ENCODE measurements at regions of chr17 and their contacts with region 1.

Region 1: DNA sequence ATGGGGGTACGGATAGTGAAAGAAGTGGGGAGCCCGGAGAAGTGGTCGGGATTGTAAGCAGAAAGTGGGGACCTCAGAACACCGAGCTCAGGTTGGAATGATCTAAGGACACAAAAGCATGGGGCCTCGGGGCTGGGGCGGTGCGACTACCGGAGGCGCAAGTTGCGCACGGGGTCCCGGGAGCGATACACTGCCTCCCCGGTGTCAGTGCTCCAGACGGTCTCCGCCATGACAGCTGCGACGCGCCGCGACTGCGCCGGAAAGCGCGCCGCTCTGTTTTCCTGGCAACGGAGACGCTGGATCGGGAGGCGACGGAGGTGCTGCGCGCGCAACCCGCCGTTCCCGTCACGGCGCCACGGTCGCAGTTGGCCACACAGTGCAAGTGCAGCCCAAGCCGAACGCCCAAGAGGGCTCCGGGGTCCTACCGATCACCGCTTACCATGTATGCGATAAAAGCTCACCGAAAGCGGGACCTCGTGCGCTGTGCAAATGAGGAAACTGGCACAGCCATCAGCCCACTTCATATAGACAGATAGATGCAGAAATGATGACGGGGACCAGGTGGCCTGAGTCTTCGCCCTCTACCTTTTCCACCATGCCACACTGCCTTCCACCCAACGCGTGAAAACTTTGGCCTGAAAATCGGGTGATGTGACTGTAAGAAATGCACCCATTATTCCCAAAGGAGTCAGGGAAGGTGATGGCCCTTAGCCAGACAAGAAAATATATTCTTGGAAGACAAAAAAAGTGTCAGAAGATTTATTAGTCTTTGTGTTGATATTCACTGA is at the start of gene MKS1:
- H3K4me3 ChIP-seq: peak within 1 kb of the TSS; percentile 79
- H3K27ac ChIP-seq: peak within 1 kb of the TSS; percentile 14; the same call in 1 of the 2 replicates
- H3K4me1 ChIP-seq: no peaks in the 10 kb centered on the region
- CTCF ChIP-seq: peak; percentile 94

Region 2: DNA sequence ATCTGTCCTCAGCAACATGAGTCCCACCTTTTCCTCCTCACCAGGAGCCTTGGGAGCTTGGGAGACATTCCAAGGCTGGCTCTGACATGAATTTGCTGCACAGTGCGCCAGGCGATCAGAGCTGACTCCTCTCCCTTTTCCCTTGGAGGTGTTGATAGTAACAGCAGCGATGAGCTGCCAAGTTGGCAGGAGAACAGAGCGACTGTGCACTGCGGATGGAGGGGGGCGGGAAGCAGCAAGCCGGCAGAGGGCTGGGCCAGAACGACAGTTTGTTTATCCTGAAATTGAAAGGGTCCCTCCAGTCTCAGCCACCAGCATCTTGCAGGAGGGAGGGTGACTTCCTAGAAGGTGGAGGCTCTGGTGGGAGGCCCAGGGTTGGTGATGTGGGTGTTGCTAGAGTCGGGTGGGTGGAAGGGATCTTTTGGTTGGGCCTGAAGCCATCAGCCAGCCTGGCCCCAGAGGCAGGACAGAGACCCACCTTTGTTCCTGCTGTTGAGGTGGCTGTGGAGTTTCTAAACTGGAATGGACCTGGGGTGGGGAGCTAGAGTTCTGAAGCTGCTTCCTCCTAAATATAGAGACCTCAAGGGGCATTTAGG is 158.5 kb before region 1 on chr17:
- CTCF ChIA-PET with region 1: no interaction called
- POLR2A ChIA-PET with region 1: no interaction called
- H3K4me3 ChIP-seq: no peak overlapping the region
- H3K27ac ChIP-seq: no peak overlapping the region
- H3K4me1 ChIP-seq: no peaks in the 10 kb centered on the region
- CTCF ChIP-seq: no peak

Region 3: DNA sequence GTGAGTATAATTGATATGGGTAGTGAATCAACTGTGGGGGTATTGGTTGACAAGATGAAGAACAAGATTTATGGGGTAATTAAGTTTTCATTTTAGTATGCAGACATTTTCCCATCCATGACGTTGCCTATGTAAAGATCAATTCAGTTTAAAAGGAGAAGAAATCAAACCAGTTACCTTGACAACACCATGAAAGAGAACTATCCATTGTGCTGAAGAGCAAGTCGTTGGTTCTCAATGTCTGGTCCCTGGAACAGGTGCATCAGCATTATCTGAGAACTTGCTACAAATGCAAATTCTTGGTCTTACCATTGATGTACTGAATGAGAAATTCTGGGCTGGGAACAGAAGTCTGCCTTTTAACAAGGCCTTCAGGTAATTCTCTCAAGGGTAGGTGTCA is 53.2 kb before region 1 on chr17:
- CTCF ChIA-PET with region 1: no interaction called
- POLR2A ChIA-PET with region 1: no interaction called
- H3K4me3 ChIP-seq: no peak overlapping the region
- H3K27ac ChIP-seq: no peak overlapping the region
- H3K4me1 ChIP-seq: no peaks in the 10 kb centered on the region
- CTCF ChIP-seq: no peak

Region 4: GRCh38 chr17:58249270-58250133 is 30.3 kb after region 1 on chr17:
- CTCF ChIA-PET with region 1: interaction called, 15 read pairs
- POLR2A ChIA-PET with region 1: interaction called, 7 read pairs
- H3K4me3 ChIP-seq: peak overlapping the region; percentile 32
- H3K27ac ChIP-seq: no peak overlapping the region; the same call in 1 of the 2 replicates
- H3K4me1 ChIP-seq: no peaks in the 10 kb centered on the region
- CTCF ChIP-seq: peak; percentile 71

Measured in HEK293 (cell line).